Activated CD4-positive, alpha-beta T cell treated with anti-CD3 and anti-CD28 coated beads for 36 hours (primary cell): ENCODE measurements at regions of chr10 and their contacts with region 1.

Region 1: GRCh38 chr10:110556969-110557601 is 10.4 kb upstream of the SMC3 start:
- DNase-seq: peak; percentile 86
- ATAC-seq: peak; percentile 98
- H3K4me3 Mint-ChIP-seq: no peak overlapping the region
- H3K27ac Mint-ChIP-seq: no peak overlapping the region
- H3K4me1 Mint-ChIP-seq: peaks cover 7% of the 10 kb centered on the region
- H3K27me3 Mint-ChIP-seq: peaks cover 5% of the 10 kb centered on the region

Region 2: DNA sequence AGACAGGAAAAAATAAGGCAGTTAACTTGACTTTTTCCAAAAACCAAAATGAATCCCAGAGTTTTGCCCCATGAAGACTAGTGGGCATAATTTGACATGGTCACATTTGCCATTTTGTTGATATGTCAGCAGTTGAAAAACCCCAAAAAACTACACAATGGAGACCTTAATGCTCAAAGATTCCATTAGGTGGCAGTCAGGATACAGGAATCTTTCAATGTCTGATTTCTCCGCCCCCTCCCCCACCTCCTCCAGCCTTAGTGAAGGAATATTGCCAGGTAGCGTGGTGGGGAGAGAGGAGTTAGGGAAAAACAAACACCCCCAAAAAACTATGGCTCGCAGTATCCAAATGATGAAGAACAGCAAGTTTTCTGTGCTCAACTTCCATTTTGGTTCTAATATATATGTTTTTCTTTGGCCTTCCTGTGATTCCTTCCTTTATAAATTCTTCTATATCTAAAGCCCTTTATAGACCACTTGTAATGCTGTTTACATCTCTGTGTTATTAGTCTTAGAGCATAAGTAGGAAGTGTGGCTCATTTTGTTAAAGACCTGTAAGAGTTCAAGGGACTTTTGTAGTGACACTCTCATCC is 245.6 kb before region 1 on chr10:
- CTCF ChIA-PET with region 1: interaction called, 6 read pairs
- POLR2A ChIA-PET with region 1: no interaction called
- intact Hi-C with region 1: loop called in 1 of 2 experiments (anchors 2 kb)
- DNase-seq: peak; percentile 61
- ATAC-seq: peak; percentile 70
- H3K4me3 Mint-ChIP-seq: no peak overlapping the region
- H3K27ac Mint-ChIP-seq: no peak overlapping the region
- H3K4me1 Mint-ChIP-seq: peaks cover 27% of the 10 kb centered on the region
- H3K27me3 Mint-ChIP-seq: peaks cover 2% of the 10 kb centered on the region